Heart left ventricle (tissue), 16 donors: ENCODE measurements at regions of chr17 and their contacts with region 1.

Region 1: DNA sequence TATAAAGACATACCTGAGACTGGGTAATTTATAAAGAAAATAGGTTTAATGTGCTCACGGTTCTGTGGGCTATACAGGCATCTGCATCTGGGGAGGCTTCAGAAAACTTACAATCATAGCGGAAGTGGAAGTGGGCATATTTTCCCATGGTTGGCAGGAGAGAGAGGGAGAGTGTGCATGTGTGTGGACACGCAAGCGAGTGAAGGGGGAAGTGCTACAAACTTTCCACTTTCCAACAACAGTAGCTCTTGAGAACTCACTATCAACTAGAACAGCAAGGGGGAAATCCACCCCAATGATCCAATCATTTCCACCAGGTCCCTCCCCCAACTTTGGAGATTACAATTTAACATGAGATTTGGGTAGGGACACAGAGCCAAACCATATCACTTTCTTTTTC is 11.1 kb downstream of the TAOK1 start:
- DNase-seq: no peak
- ATAC-seq: peak in 1 of 4 donors; percentile 38
- H3K4me3 ChIP-seq: no peak overlapping the region
- H3K27ac ChIP-seq: no peak overlapping the region
- H3K4me1 ChIP-seq: peaks cover 0 to 17% (median 2%) of the 10 kb centered on the region in 12 donors
- H3K27me3 ChIP-seq: no peaks in the 10 kb centered on the region
- CTCF ChIP-seq: no peak
- POLR2A ChIP-seq: no peak

Region 2: DNA sequence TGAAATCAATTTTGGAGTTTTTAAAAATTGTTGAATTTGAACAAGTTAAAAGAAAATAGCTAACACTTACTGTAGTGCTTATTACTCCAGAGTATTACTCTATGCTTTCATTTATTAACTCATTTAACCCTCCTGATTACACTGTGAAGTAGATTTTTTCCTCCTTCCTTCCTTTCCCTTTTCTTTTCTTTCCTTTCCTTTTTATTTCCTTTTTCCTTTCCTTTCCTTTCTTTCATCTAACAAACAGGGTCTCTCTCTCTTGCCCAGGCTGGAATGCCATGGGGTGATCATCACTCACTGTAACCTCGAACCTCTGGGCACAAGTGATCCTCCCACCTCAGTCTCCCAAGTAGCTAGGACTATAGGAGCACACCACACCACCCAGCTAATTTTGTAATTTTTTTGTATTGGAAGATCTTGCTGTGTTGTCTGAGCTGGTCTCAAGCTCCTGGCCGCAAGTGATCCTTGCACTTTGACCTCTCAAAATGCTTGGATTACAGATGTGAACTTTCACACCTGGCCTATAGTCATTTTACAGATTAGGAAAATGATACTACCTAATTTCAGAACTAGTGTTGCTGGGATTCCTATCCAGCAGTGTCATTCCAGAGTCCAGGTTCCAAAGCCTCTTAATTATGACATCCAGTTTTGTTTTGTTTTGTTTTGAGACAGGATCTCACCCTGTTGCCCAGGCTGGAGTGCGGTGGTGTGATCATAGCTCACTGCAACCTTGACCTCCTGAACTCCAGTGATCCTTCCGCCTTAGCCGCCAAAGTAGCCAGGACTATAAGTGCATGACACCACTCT is 48.8 kb after region 1 on chr17:
- intact Hi-C with region 1: loop called in 1 of 10 experiments (anchors 5 kb)
- DNase-seq: no peak
- ATAC-seq: no peak
- H3K4me3 ChIP-seq: no peak overlapping the region
- H3K27ac ChIP-seq: no peak overlapping the region
- H3K4me1 ChIP-seq: peaks cover 2 to 40% (median 30%) of the 10 kb centered on the region in 12 donors
- H3K27me3 ChIP-seq: no peaks in the 10 kb centered on the region
- CTCF ChIP-seq: no peak
- POLR2A ChIP-seq: no peak